Activated CD8-positive, alpha-beta T cell treated with anti-CD3 and anti-CD28 coated beads for 36 hours (primary cell): ENCODE measurements at regions of chr1 and their contacts with region 1.

Region 1: DNA sequence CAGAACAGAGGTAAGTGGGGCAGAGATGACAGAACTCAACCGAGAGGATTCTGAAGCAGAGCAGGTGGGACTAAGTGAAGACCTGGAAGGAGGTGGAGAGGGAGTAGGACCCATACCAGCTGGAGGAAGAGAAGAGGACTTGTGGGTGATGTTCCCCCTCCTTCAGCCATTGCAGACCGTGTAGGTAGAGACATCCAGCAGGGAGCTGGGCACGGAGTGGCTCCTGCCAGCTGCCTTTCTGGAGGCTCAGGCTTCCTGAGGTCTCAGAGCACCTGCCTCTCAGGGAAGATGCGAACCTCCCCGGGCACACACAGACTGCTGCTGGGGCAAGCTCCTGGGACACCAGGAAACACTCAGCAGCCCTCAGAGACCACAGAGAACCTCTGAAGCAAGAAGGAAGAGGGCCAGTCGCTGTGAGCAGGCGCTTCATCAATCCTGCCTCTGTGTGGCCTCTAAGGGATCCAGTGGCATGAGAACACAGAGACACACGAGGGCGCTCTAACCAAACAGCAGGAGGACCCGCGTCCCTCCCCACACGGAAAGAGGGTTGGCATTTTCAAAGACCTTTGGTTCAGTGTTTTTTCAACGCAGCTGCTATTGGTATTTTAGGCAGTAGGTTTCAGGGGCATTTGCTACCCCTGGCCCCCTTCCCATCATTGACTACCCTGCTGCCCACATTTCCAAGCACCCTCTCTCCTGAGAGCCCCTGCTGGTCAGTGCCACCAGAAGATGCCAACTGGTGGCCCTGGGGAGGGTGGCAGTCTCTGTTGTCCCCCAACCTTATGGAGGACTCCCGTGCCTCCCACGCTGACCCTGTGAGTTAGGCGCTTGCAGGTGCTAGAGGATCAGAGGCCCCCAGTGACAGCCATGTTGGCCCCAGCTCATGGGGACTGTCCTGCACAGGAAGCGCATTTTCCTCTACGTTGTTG is 89.6 kb upstream of the EDN2 start:
- DNase-seq: peak; percentile 91
- ATAC-seq: peak; percentile 95
- H3K4me3 Mint-ChIP-seq: no peak overlapping the region
- H3K27ac Mint-ChIP-seq: peak overlapping the region; percentile 51
- H3K4me1 Mint-ChIP-seq: peaks cover 33% of the 10 kb centered on the region
- H3K27me3 Mint-ChIP-seq: no peaks in the 10 kb centered on the region
- CTCF ChIP-seq: peak; percentile 93

Region 2: GRCh38 chr1:41662061-41662764 is 88.2 kb after region 1 on chr1:
- CTCF ChIA-PET with region 1: interaction called, 12 read pairs
- POLR2A ChIA-PET with region 1: no interaction called
- intact Hi-C with region 1: no loop called
- DNase-seq: peak; percentile 88
- ATAC-seq: peak; percentile 75
- H3K4me3 Mint-ChIP-seq: peak overlapping the region; percentile 96
- H3K27ac Mint-ChIP-seq: peak overlapping the region; percentile 65
- H3K4me1 Mint-ChIP-seq: peaks cover 73% of the 10 kb centered on the region
- H3K27me3 Mint-ChIP-seq: no peaks in the 10 kb centered on the region
- CTCF ChIP-seq: no peak

Region 3: GRCh38 chr1:41739061-41739955 is 165.3 kb after region 1 on chr1:
- CTCF ChIA-PET with region 1: interaction called, 3 read pairs
- POLR2A ChIA-PET with region 1: no interaction called
- intact Hi-C with region 1: loop called (anchors 10 kb)
- DNase-seq: peak; percentile 95
- ATAC-seq: peak; percentile 47
- H3K4me3 Mint-ChIP-seq: peak overlapping the region; percentile 67
- H3K27ac Mint-ChIP-seq: peak overlapping the region; percentile 95
- H3K4me1 Mint-ChIP-seq: peaks cover 92% of the 10 kb centered on the region
- H3K27me3 Mint-ChIP-seq: no peaks in the 10 kb centered on the region
- CTCF ChIP-seq: no peak

Region 4: GRCh38 chr1:41802532-41803501 is 228.8 kb after region 1 on chr1:
- CTCF ChIA-PET with region 1: interaction called, 3 read pairs
- POLR2A ChIA-PET with region 1: no interaction called
- intact Hi-C with region 1: loop called (anchors 5 kb)
- DNase-seq: no peak
- ATAC-seq: no peak
- H3K4me3 Mint-ChIP-seq: no peak overlapping the region
- H3K27ac Mint-ChIP-seq: peak overlapping the region; percentile 86
- H3K4me1 Mint-ChIP-seq: peaks cover 83% of the 10 kb centered on the region
- H3K27me3 Mint-ChIP-seq: no peaks in the 10 kb centered on the region
- CTCF ChIP-seq: no peak

Region 5: DNA sequence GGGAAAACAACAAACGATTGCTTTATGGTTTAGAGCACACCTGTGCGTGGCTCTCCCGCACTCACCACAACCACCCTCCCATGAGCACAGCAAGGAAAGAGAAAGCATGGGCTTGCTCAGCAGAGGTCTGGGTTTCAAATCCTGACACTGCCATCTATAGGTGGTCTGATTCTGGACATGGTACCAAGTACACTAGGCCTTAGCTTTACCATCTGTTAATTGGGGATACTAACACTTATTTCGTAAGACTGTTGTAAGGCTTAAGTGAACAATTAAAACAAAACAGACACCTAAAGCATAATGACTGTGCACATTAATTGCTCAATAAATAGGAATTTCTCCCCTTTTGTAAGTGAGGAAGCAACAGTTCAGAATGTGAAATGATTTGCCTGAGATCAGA is 294.6 kb after region 1 on chr1:
- CTCF ChIA-PET with region 1: interaction called, 7 read pairs
- POLR2A ChIA-PET with region 1: no interaction called
- intact Hi-C with region 1: loop called (anchors 10 kb)
- DNase-seq: peak; percentile 58
- ATAC-seq: peak; percentile 77
- H3K4me3 Mint-ChIP-seq: no peak overlapping the region
- H3K27ac Mint-ChIP-seq: no peak overlapping the region
- H3K4me1 Mint-ChIP-seq: peaks cover 30% of the 10 kb centered on the region
- H3K27me3 Mint-ChIP-seq: no peaks in the 10 kb centered on the region
- CTCF ChIP-seq: peak; percentile 52

Region 6: GRCh38 chr1:41891199-41891896 is 317.3 kb after region 1 on chr1:
- CTCF ChIA-PET with region 1: interaction called, 17 read pairs
- POLR2A ChIA-PET with region 1: no interaction called
- intact Hi-C with region 1: no loop called
- DNase-seq: peak; percentile 71
- ATAC-seq: peak; percentile 90
- H3K4me3 Mint-ChIP-seq: peak overlapping the region; percentile 84
- H3K27ac Mint-ChIP-seq: peak overlapping the region; percentile 92
- H3K4me1 Mint-ChIP-seq: peaks cover 49% of the 10 kb centered on the region
- H3K27me3 Mint-ChIP-seq: no peaks in the 10 kb centered on the region
- CTCF ChIP-seq: peak; percentile 65

Region 7: DNA sequence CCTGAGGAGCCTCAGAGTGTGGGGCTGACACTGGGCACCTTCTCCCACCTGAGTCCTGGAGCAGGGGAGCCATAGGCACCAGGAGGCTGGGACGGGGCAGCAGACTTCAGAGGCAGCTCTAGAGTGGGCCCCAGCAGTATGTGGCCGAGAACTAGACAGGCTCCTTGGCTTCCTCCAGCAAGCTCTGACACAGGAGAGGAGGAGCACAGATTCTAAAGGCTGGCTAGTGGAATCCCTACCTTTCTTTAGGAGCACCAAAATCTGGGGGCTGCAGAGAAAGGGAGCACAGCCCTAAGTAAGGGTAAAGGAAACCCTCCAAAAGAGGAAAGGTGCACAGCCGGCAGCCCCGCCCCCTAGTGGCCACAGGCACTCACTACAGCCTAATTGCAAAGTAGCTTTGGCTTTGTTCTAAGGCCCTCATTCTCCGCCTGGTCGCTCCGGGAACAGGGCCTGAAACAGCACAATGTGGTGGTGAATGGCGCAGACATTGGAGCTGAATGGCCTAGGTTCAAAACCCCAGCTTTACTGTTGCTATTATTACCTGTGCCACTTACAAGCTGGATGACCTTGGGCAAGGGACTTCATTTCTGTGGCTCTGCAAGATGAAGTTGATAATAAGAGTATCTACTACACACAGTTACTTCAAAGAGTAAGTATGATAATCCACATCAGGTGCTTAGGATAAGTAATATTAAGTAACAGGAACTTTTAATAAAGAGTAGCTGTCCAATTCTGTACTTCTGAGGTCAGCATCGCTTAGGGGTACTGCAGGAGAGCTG is 599.3 kb after region 1 on chr1:
- CTCF ChIA-PET with region 1: interaction called, 18 read pairs
- POLR2A ChIA-PET with region 1: no interaction called
- intact Hi-C with region 1: no loop called
- DNase-seq: peak; percentile 72
- ATAC-seq: peak; percentile 92
- H3K4me3 Mint-ChIP-seq: no peak overlapping the region
- H3K27ac Mint-ChIP-seq: no peak overlapping the region
- H3K4me1 Mint-ChIP-seq: no peaks in the 10 kb centered on the region
- H3K27me3 Mint-ChIP-seq: no peaks in the 10 kb centered on the region
- CTCF ChIP-seq: peak; percentile 91